ENCODE measurements at regions of chr1 and their contacts with region 1.

Region 1: DNA sequence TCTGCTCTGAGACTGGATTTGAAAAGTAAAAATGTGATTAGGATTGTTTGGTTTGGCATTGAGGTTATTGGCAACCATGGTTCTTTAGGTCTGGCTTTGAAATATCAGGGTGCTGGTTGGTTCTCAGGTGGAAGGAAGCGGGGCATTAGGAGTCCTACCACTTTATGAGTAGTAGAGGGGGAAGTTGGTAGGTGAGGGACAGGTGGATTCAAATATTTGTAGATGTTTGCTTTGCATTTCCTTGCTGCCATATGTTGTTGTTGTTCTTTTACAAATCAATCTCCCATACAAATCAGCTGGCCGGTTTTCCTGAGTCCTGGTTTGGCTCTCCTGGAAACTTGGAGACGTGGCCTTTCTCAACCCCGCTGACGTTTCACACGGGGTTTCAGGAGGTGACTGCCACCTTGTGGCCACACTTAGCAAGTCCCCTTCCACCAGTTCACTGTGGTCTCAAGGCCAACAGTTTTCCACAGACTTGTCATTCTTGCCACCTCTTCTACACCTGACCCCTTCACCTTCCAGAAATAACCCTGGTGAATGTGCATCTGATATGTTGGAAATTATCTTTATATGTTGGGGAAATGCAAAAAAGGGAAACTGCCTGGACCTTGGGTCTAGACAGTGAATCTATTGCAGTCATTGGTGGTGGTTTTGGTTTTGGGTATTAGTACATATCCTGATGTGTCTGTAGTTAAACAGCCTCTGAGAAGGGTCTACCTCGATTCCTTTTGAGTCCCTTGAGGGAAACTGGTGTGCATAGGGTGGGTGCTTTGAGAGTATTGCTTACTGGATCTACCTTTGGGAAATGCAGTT is 127.0 kb upstream of the KIAA0040 start:
- DNase-seq: peak; percentile 72 to 91 (median 81)
- H3K4me3 ChIP-seq: no peak overlapping the region
- H3K27ac ChIP-seq: peak overlapping the region in 1 of 5 donors; percentile 27
- H3K4me1 ChIP-seq: peaks cover 0 to 4% of the 10 kb centered on the region in 2 donors
- H3K27me3 ChIP-seq: no peaks in the 10 kb centered on the region
- CTCF ChIP-seq: peak; percentile 77 to 94 (median 90)
- POLR2A ChIP-seq: no peak

Region 2: DNA sequence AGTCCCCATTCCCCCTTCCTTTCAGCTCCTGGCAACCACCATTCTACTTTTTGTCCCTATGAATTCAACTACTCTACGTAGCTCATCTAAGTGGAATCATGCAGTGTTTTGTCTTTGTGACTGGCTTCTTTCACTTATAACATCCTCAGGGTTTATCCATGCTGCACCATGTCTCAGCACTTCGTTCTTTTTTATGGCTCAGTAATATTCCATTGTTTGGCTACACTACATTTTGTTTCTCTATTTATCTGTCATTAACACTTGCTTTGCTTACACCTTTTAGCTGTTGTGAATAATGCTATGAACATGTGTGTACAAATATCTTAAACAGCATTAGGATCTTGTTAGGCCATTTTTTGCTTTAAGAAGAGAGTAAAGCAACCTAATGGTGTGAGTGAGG is 294.9 kb before region 1 on chr1:
- intact Hi-C with region 1: loop called in 1 of 2 experiments (anchors 5 kb)
- DNase-seq: no peak
- H3K4me3 ChIP-seq: no peak overlapping the region
- H3K27ac ChIP-seq: no peak overlapping the region
- H3K4me1 ChIP-seq: peaks cover 7 to 12% of the 10 kb centered on the region in 2 donors
- H3K27me3 ChIP-seq: no peaks in the 10 kb centered on the region
- CTCF ChIP-seq: no peak
- POLR2A ChIP-seq: no peak

Region 3: DNA sequence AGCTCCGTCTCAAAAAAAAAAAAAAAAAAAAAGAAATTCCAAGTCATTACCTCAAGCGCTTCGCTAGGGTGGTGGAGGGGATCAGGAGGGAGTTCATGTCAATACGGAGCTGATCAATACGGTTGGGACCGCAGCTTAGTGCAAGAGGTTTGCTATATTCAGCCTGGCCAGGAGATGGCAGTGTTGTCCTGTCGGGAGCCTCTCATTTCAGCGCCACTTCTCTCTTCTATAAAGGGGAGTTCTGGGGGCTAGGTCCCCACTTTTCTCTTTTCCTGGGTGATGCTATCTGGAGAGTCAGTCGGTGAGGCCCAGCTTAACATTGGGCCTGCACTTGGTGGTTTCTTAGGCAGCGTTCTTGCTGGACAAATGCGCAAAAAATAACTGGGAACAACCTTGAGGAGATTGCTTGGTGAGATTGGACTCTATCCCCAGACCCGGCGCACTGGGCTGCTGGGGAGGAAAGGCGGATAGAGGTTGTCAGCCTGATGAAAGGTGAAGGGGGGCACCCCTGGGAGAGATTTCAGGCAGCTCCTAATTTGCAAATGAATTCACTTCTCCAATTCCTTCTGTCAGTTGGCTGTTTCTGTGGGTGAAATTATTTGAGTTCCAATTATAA is 167.5 kb before region 1 on chr1:
- intact Hi-C with region 1: loop called (anchors 2 kb)
- DNase-seq: peak; percentile 28 to 79 (median 65)
- H3K4me3 ChIP-seq: no peak overlapping the region
- H3K27ac ChIP-seq: no peak overlapping the region
- H3K4me1 ChIP-seq: no peaks in the 10 kb centered on the region
- H3K27me3 ChIP-seq: peaks cover 7% of the 10 kb centered on the region
- CTCF ChIP-seq: peak; percentile 61 to 91 (median 88)
- POLR2A ChIP-seq: no peak